Panc1 (cell line): ENCODE measurements at regions of chr12 and their contacts with region 1.

Region 1: GRCh38 chr12:31393004-31393550 is 67.1 kb upstream of the SINHCAF start:
- DNase-seq: no peak
- ATAC-seq: no peak
- H3K4me3 ChIP-seq: no peak overlapping the region
- H3K27ac ChIP-seq: no peak overlapping the region
- H3K4me1 ChIP-seq: no peaks in the 10 kb centered on the region
- H3K27me3 ChIP-seq: no peaks in the 10 kb centered on the region
- CTCF ChIP-seq: no peak

Region 2: DNA sequence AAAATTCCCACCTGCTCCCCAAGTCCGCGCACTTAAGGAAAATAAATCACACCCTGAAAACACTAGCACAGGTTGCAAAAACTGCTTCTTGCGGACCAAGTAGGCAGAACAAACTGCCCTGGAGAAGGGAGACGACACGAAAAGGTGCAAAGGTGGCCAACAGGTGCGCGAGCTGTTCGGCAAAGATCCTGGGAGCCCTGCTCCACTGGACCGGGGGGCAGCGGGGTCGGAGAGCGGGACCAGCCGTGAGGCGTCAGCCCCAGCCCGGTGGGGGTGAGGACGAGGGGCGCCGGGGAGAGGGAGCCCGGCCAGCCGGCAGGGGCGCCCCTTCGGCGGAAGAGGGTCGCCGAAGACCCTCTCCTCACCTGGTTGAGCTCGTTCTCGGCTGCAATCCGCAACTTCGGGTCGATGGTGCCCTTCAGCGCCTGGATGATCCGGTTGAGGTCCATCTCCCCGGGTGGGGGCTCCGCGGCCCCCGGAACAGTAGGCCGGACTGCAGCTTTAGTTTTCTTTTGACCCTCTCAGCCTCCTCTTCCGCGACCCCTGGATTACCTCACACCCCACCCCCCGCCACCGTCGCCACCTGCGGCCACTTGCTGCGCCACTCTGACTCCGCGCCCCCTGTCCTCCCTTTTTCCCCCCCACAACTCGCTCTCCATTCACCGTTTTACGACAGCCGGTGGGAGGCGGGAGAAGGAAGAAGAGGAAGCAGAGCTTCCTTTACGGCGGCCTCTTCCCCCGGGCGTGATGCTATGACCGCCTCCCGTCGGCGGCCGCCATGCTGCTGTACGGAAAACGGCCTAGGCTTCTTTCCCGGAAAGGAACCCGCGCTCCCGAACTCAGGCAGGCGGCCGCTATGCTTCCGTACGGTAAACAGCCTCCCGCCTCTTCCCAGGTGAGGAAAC is 697.6 kb before region 1 on chr12 and contains the start of gene IPO8:
- CTCF ChIA-PET with region 1: no interaction called
- POLR2A ChIA-PET with region 1: no interaction called
- in situ Hi-C with region 1: no loop called
- intact Hi-C with region 1: no loop called
- DNase-seq: peak; percentile 57
- ATAC-seq: peak; percentile 96
- H3K4me3 ChIP-seq: peak within 1 kb of the TSS; percentile 95
- H3K27ac ChIP-seq: peak within 1 kb of the TSS; percentile 96
- H3K4me1 ChIP-seq: peaks cover 28% of the 10 kb centered on the region
- H3K27me3 ChIP-seq: no peaks in the 10 kb centered on the region
- CTCF ChIP-seq: peak; percentile 73
- total RNA-seq, gene IPO8: 46.6 TPM

Region 3: DNA sequence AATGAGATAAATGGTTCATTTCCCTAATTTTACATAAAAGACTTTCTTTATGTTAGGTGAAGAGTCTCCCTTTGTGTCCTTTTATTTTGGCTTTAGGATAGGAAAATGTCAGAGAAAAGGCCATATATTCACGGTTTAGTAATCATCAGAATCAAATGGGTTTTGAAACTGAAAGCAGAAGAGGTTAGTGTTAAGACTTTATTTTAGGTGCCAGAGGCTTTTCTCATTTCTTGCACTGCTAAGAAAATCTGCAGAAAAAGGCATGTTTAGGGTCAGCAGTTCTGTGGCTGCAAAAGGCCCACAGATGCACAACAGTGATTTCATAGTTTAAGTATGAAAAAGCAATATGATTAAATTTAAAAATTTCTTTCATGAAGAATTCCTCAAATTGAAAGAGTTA is 13.3 kb after region 1 on chr12:
- CTCF ChIA-PET with region 1: interaction called, 14 read pairs
- POLR2A ChIA-PET with region 1: no interaction called
- in situ Hi-C with region 1: no loop called
- intact Hi-C with region 1: no loop called
- DNase-seq: no peak
- ATAC-seq: no peak
- H3K4me3 ChIP-seq: no peak overlapping the region
- H3K27ac ChIP-seq: no peak overlapping the region
- H3K4me1 ChIP-seq: 0 out of 2 replicates have a peak, but pooled peaks cover 3% of the 10 kb centered on the region
- H3K27me3 ChIP-seq: no peaks in the 10 kb centered on the region
- CTCF ChIP-seq: no peak

Region 4: GRCh38 chr12:31412292-31412801 is 19.3 kb after region 1 on chr12:
- CTCF ChIA-PET with region 1: no interaction called
- POLR2A ChIA-PET with region 1: interaction called, 10 read pairs
- in situ Hi-C with region 1: no loop called
- intact Hi-C with region 1: no loop called
- DNase-seq: no peak
- ATAC-seq: no peak
- H3K4me3 ChIP-seq: no peak overlapping the region
- H3K27ac ChIP-seq: no peak overlapping the region
- H3K4me1 ChIP-seq: no peaks in the 10 kb centered on the region
- H3K27me3 ChIP-seq: no peaks in the 10 kb centered on the region
- CTCF ChIP-seq: no peak